B cell (primary cell): ENCODE measurements at regions of chr1 and their contacts with region 1.

Region 1: GRCh38 chr1:67307251-67308060 is at the start of gene IL12RB2:
- DNase-seq: peak; percentile 29
- ATAC-seq: peak; percentile 58
- H3K4me3 ChIP-seq: peak within 1 kb of the TSS; percentile 16 to 63 (median 39)
- H3K4me3 Mint-ChIP-seq: peak within 1 kb of the TSS; percentile 87
- H3K27ac ChIP-seq: no peak within 1 kb of the TSS
- H3K27ac Mint-ChIP-seq: peak within 1 kb of the TSS; percentile 10
- H3K4me1 ChIP-seq: peaks cover 10 to 13% of the 10 kb centered on the region in 2 donors
- H3K4me1 Mint-ChIP-seq: peaks cover 12% of the 10 kb centered on the region
- H3K27me3 ChIP-seq: peaks cover 0 to 17% (median 14%) of the 10 kb centered on the region in 4 experiments
- H3K27me3 Mint-ChIP-seq: peaks cover 36% of the 10 kb centered on the region
- CTCF ChIP-seq: no peak
- total RNA-seq, gene IL12RB2: 0.58 and 0.67 TPM in 2 replicates

Region 2: DNA sequence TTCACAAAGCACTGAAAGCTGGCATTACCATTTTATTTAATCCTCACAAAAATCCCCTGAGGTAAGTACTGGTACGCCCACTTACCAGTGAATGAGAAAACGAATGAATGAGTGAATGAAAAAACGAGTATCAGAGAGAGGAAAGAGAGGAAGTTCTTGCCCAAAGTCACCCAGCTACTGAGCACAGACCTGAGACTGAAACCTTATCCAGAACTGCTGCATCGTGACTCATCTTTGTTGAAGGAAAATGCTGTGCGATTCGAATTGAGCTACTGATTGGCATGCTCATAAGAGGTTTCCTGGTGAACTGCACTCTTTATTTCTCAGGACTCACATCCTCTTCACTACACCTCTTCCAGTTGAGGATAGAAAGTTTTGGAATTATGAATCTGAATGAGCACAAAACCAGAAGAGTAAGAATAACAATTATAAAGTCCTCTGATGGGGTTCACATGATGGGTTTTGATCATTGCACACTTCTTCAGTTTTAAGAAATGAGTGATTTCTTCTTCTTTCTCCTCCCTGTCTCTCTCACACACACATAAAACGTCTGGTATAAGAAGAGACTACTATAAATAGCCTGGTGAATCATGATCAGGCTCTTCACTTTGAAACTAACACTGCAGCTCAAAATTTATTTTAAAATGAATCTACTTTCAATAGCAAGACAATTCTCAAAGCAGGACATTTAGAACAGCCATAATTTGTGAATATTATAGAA is 32.3 kb after region 1 on chr1:
- CTCF ChIA-PET with region 1: no interaction called
- POLR2A ChIA-PET with region 1: no interaction called
- intact Hi-C with region 1: loop called (anchors 5 kb)
- DNase-seq: peak; percentile 35
- ATAC-seq: peak; percentile 13
- H3K4me3 ChIP-seq: no peak overlapping the region
- H3K4me3 Mint-ChIP-seq: peak overlapping the region; percentile 55
- H3K27ac ChIP-seq: no peak overlapping the region
- H3K27ac Mint-ChIP-seq: peak overlapping the region; percentile 1
- H3K4me1 ChIP-seq: peaks cover 51 to 54% of the 10 kb centered on the region in 2 donors
- H3K4me1 Mint-ChIP-seq: peaks cover 59% of the 10 kb centered on the region
- H3K27me3 ChIP-seq: no peaks in the 10 kb centered on the region
- H3K27me3 Mint-ChIP-seq: peaks cover 4% of the 10 kb centered on the region
- CTCF ChIP-seq: no peak

Region 3: GRCh38 chr1:67355745-67356424 is 48.4 kb after region 1 on chr1:
- CTCF ChIA-PET with region 1: no interaction called
- POLR2A ChIA-PET with region 1: no interaction called
- intact Hi-C with region 1: no loop called
- DNase-seq: no peak
- ATAC-seq: no peak
- H3K4me3 ChIP-seq: no peak overlapping the region
- H3K4me3 Mint-ChIP-seq: no peak overlapping the region
- H3K27ac ChIP-seq: no peak overlapping the region
- H3K27ac Mint-ChIP-seq: no peak overlapping the region
- H3K4me1 ChIP-seq: no peaks in the 10 kb centered on the region
- H3K4me1 Mint-ChIP-seq: peaks cover 2% of the 10 kb centered on the region
- H3K27me3 ChIP-seq: no peaks in the 10 kb centered on the region
- H3K27me3 Mint-ChIP-seq: peaks cover 4% of the 10 kb centered on the region
- CTCF ChIP-seq: no peak